ENCODE measurements at regions of chr11 and their contacts with region 1.

Region 1: GRCh38 chr11:46238967-46239800 is 38.3 kb upstream of the CREB3L1 start:
- DNase-seq: peak; percentile 85

Region 2: DNA sequence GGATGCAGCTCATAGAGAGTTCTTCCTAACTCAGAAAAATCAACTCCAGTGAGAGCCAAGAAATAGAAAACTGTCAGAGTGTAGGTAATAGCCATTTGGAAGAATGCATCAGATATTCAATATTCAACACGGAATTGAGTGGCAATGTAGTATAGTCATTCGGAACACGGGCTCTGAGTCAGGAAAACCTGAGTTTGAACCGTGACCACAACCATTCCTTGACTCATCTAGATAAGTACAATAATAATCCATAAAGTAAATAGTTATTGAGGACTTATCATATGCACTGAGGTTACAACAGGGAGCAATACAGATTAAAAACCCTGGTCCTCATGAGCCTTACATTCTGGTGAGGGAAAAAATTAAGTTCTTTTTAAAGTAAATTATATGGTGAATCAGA is 55.4 kb before region 1 on chr11:
- CTCF ChIA-PET with region 1: no interaction called
- POLR2A ChIA-PET with region 1: no interaction called
- DNase-seq: no peak

Region 3: GRCh38 chr11:46272816-46273427 is 33.7 kb after region 1 on chr11:
- CTCF ChIA-PET with region 1: interaction called, 9 read pairs
- POLR2A ChIA-PET with region 1: interaction called, 26 read pairs
- DNase-seq: no peak

Region 4: DNA sequence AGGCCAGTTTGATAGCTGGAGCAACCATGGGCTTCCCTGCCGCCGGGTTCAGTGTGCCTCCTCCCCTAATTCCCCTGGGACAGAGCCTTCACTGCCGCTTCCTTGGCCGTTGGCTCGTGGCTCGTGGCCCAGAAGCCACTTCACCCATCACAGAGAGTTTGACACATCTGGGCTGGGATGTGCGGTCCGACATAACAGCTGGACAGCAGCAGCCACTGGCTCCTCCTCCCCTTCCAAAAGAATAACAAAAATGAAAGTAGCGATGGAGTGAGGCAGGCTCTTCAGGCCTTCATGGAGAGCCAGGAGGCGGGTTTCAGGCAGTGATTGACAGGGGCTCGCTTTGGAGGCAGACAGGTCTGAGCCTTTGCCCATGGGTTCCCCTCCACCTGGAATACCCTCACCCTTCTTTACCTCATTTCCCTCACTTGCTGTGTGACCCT is 46.4 kb after region 1 on chr11:
- CTCF ChIA-PET with region 1: no interaction called
- POLR2A ChIA-PET with region 1: interaction called, 16 read pairs
- DNase-seq: no peak

Region 5: GRCh38 chr11:46308631-46309419 is 69.6 kb after region 1 on chr11:
- CTCF ChIA-PET with region 1: interaction called, 22 read pairs
- POLR2A ChIA-PET with region 1: interaction called, 38 read pairs
- DNase-seq: peak; percentile 76

Region 6: DNA sequence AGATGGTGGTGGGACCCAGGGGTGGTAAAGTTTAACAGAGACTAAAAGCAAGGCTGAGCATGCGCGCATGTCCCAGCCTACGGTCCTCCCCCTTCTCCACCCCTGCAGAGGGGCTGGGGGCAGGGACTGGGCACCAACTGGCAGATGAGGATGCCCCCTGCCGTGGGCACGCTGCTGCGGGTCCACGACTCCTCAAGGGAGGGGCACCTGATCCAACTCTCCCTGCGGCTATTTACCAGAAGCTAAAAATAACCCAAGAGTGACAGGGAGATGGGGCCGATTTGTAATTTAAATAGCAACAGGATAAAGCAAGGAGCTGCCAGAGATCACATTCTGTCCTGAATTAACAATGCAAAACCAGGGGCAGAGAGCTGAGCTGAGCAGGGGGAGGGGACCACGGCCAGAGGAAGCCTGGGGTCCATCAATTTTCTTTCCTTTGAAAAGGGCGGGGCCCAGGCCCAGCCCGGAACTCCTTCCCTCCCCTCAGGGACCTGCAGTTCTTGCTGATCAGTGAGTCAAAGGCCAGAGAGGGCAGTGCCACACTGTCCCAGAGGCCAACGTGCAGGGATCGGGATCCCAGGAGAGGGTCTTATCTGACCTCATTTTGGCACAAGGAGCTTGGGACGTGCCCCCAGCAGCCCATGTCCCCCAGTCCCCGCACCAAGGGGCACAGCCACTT is 99.9 kb after region 1 on chr11:
- CTCF ChIA-PET with region 1: no interaction called
- POLR2A ChIA-PET with region 1: interaction called, 11 read pairs
- DNase-seq: no peak